CD14-positive monocyte (primary cell): ENCODE measurements at regions of chr7 and their contacts with region 1.

Region 1: DNA sequence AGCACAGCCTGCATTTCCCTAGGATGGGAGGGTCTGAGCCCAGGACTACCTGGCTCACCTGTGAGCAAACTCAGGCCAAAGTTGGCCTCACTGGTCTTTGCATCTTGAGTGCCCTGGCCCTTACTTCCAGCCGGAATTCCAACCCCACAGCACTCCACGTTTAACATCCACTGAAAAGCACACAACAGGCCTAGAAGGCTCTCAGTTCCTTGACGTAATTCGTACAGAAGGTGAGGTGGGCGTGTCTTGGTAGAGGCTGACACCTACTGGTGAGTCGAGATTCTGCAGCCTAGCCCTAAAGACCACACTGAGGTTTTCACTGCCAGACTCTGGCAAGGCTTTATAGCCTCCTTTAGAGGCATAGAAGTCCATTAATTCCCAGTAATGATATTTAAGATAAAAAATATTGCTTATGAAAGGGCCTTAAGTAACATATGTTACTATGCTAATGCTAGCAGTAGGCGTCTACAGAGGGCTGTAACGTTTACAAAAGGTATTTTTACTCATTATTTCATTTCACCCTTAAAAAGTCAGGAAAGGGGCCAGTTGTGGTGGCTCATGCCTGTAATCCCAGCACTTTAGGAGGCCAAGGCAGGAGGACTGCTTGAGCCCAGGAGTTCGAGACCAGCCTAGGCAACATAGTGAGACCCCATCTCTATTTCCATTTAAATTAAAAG is 95.8 kb downstream of the HIP1 start:
- DNase-seq: peak; percentile 77 to 86 (median 81)
- H3K4me3 ChIP-seq: no peak overlapping the region
- H3K4me3 Mint-ChIP-seq: no peak overlapping the region
- H3K27ac ChIP-seq: no peak overlapping the region
- H3K27ac Mint-ChIP-seq: peak overlapping the region in 6 of 7 donors; percentile 41 to 80 (median 44)
- H3K4me1 ChIP-seq: peaks cover 19% of the 10 kb centered on the region in 2 donors
- H3K4me1 Mint-ChIP-seq: peaks cover 19% of the 10 kb centered on the region
- H3K27me3 ChIP-seq: no peaks in the 10 kb centered on the region
- H3K27me3 Mint-ChIP-seq: peaks cover 0 to 3% (median 0%) of the 10 kb centered on the region in 3 donors
- CTCF ChIP-seq: peak; percentile 97

Region 2: GRCh38 chr7:75572396-75572795 is 70.6 kb before region 1 on chr7:
- intact Hi-C with region 1: loop called in 1 of 2 experiments (anchors 5 kb)
- DNase-seq: no peak
- H3K4me3 ChIP-seq: no peak overlapping the region
- H3K4me3 Mint-ChIP-seq: no peak overlapping the region
- H3K27ac ChIP-seq: no peak overlapping the region
- H3K27ac Mint-ChIP-seq: peak overlapping the region in 2 of 7 donors; percentile 13 to 20
- H3K4me1 ChIP-seq: peaks cover 16 to 19% of the 10 kb centered on the region in 2 donors
- H3K4me1 Mint-ChIP-seq: peaks cover 16% of the 10 kb centered on the region
- H3K27me3 ChIP-seq: no peaks in the 10 kb centered on the region
- H3K27me3 Mint-ChIP-seq: no peaks in the 10 kb centered on the region
- CTCF ChIP-seq: no peak

Region 3: GRCh38 chr7:75608451-75609122 is 34.4 kb before region 1 on chr7:
- intact Hi-C with region 1: loop called (anchors 5 kb)
- DNase-seq: no peak
- H3K4me3 ChIP-seq: no peak overlapping the region
- H3K4me3 Mint-ChIP-seq: no peak overlapping the region
- H3K27ac ChIP-seq: no peak overlapping the region
- H3K27ac Mint-ChIP-seq: peak overlapping the region in 2 of 7 donors; percentile 30 to 39
- H3K4me1 ChIP-seq: peaks cover 42 to 52% of the 10 kb centered on the region in 2 donors
- H3K4me1 Mint-ChIP-seq: peaks cover 58% of the 10 kb centered on the region
- H3K27me3 ChIP-seq: no peaks in the 10 kb centered on the region
- H3K27me3 Mint-ChIP-seq: no peaks in the 10 kb centered on the region
- CTCF ChIP-seq: no peak